Transverse colon (tissue), 4 donors: ENCODE measurements at regions of chr4 and their contacts with region 1.

Region 1: DNA sequence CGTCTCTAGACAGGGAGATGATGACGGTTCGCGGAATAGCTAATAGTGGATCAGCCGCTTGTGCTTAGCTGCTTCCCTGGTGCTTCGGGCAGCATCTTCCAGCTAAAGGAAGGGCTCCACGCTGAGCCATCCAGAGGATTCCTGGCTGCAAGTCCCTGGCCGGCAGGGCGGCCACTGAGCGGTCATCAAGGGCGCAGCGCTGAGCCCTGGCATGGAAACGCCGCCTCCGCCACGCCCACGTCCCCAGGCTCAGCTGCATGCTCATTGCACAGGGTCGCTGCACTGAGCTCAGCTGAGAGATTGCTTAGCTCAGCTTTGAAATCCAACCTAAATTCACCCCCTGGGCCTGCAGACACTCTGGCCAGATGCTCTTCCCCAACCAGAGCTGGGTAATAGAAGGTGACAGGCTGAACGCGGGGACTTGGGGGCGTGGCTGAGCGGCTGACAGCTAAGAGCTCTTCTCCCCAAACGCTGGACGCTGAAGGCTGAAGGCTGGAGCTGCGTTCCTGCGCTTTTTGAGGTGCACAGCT is 118.2 kb upstream of the KIT start:
- DNase-seq: peak; percentile 54
- H3K4me3 ChIP-seq: peak overlapping the region in 3 of 4 donors; percentile 26 to 48 (median 35)
- H3K27ac ChIP-seq: no peak overlapping the region
- H3K4me1 ChIP-seq: peaks cover 0 to 9% (median 7%) of the 10 kb centered on the region in 4 donors
- H3K27me3 ChIP-seq: no peaks in the 10 kb centered on the region
- CTCF ChIP-seq: peak in 1 of 5 experiments; percentile 13
- EP300 ChIP-seq: no peak
- POLR2A ChIP-seq: no peak

Region 2: DNA sequence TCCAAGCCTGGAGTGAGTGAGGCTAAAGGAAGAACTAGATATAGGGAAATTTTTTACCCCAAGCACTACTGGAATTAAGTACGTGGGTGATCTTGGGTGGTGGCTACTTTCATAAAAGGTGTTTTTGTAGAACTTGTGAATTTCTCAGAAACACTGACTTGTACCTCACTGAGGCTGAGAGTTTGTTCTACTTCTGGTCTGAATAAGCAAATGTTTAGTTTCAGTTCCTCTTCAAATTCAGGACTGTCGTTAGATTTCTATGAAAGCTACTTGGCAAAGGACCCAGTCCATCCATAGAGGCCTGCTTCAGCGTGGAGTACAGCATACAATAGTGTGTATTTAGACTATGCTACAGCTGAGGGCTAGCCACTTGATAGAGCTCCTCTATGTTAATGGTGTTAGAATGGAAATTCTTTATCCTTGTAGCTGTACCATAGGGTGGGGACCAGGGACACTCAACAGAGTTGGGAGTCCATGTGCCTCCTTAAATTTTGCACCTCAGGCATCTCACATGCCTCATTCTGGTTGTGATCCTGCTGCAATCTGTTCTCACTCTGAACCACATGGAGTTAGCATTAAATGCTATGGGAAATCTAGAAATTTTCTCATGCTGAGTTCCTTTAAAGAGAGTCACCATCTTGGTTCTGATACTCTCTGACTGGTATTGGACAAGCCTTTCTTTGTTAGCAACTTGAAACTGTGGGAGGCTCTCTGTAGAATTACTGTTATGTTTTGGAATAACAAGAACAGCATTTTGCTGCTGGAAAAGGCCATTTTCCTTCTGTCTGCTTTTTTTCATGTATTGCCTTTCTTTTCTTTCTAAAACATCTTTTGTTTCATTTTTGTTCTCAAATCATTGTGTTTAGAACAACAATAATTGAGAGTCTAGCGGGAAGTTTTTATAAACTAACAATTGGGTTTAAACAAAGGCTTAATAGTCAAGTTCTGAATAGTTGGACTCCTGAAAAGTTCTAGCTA is 223.7 kb before region 1 on chr4:
- in situ Hi-C with region 1: no loop called
- intact Hi-C with region 1: no loop called
- DNase-seq: no peak
- H3K4me3 ChIP-seq: no peak overlapping the region
- H3K27ac ChIP-seq: no peak overlapping the region
- H3K4me1 ChIP-seq: no peaks in the 10 kb centered on the region
- H3K27me3 ChIP-seq: peaks cover 4% of the 10 kb centered on the region
- CTCF ChIP-seq: no peak
- EP300 ChIP-seq: no peak
- POLR2A ChIP-seq: no peak

Region 3: GRCh38 chr4:54607067-54607466 is 67.5 kb after region 1 on chr4:
- in situ Hi-C with region 1: loop called in 1 of 4 experiments (anchors 10 kb)
- intact Hi-C with region 1: no loop called
- DNase-seq: no peak
- H3K4me3 ChIP-seq: no peak overlapping the region
- H3K27ac ChIP-seq: no peak overlapping the region
- H3K4me1 ChIP-seq: peaks cover 0 to 8% (median 3%) of the 10 kb centered on the region in 4 donors
- H3K27me3 ChIP-seq: no peaks in the 10 kb centered on the region
- CTCF ChIP-seq: no peak
- EP300 ChIP-seq: no peak
- POLR2A ChIP-seq: no peak